ENCODE measurements at regions of chr2 and their contacts with region 1.

Region 1: DNA sequence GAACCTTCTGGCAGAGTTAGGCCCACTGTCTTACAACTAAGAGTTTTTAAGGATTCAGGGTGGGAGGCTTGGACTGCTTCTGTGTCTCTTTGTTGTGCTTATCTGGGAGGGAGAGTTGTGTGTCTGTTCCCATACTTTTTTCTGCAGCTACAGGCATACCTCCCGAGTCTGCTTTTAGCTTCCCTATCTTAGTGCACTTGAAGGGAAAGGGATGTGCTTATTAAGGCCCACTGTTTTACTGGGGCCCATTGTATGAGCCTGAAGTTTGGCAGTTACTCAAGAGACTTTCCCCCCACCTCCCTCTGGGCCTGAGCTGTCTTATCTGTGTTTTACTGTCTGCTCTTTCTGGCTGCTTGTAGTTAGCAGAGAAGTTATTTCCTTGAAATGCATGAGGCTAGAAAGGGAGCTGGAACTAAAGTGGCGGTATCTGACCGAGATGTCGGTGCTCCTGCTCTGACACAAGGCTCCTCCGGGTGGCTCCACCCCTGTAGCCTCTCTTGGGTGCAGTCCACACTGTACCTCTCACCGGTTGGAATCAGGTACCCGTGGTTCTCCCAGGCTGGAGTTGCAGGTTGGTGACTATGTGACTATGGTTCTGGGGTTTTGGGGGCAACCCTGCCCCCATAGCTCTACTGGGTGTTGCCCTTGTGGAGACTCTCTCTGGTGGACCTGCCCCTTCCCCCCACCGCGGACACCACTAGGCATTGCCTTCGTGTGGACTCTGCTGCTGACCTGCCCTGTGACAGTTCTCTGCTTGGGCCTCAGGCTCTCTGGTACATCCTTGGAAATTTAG is 12.9 kb downstream of the UBR3 start:
- DNase-seq: no peak
- H3K4me3 ChIP-seq: no peak overlapping the region
- H3K27ac ChIP-seq: no peak overlapping the region
- H3K4me1 ChIP-seq: no peaks in the 10 kb centered on the region
- H3K27me3 ChIP-seq: no peaks in the 10 kb centered on the region
- CTCF ChIP-seq: no peak

Region 2: GRCh38 chr2:169891593-169892298 is 51.6 kb after region 1 on chr2:
- CTCF ChIA-PET with region 1: no interaction called
- dilution Hi-C with region 1: loop called (anchors 10 kb)
- in situ Hi-C with region 1: no loop called
- intact Hi-C with region 1: no loop called
- DNase-seq: peak; percentile 28
- H3K4me3 ChIP-seq: no peak overlapping the region
- H3K27ac ChIP-seq: no peak overlapping the region
- H3K4me1 ChIP-seq: peaks cover 5% of the 10 kb centered on the region
- H3K27me3 ChIP-seq: no peaks in the 10 kb centered on the region
- CTCF ChIP-seq: no peak

Region 3: DNA sequence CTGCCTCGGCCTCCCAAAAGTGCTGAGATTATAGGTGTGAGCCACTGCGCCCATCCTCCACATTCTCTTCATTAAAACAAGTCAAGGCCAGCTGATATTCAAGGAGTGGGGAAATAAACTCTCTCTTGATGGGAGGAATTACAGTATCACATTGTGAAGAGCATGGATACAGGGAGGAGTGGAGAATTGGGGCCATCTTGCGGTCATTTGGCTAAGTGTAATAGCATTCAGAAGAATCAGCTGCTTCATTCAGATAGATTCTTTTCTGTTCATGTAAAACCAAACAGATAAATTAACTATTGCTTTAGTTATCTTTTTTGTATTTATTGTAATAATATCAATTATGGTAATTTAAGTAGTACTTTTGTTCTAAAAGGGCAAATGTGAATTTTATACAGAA is 143.4 kb after region 1 on chr2:
- CTCF ChIA-PET with region 1: no interaction called
- dilution Hi-C with region 1: no loop called
- in situ Hi-C with region 1: no loop called
- intact Hi-C with region 1: no loop called
- DNase-seq: no peak
- H3K4me3 ChIP-seq: no peak overlapping the region
- H3K27ac ChIP-seq: no peak overlapping the region
- H3K4me1 ChIP-seq: no peaks in the 10 kb centered on the region
- H3K27me3 ChIP-seq: no peaks in the 10 kb centered on the region
- CTCF ChIP-seq: no peak